K562 (cell line): ENCODE measurements at regions of chr3 and their contacts with region 1.

Region 1: GRCh38 chr3:41872157-41872556 is 89.7 kb downstream of the ULK4 start:
- DNase-seq: no peak
- ATAC-seq: no peak
- H3K4me3 ChIP-seq: no peak overlapping the region
- H3K27ac ChIP-seq: no peak overlapping the region
- H3K4me1 ChIP-seq: no peaks in the 10 kb centered on the region
- H3K27me3 ChIP-seq: peaks cover 2 to 7% of the 10 kb centered on the region in 2 experiments; a peak in 3 of 5 replicates
- CTCF ChIP-seq: no peak
- EP300 ChIP-seq: no peak
- POLR2A ChIP-seq: no peak
- RAD21 ChIP-seq: no peak

Region 2: GRCh38 chr3:40719660-40720287 is 1152.4 kb before region 1 on chr3:
- CTCF ChIA-PET with region 1: no interaction called
- POLR2A ChIA-PET with region 1: no interaction called
- in situ Hi-C with region 1: no loop called
- intact Hi-C with region 1: loop called (anchors 10 kb)
- DNase-seq: peak; percentile 42 to 71 (median 46)
- ATAC-seq: peak; percentile 69
- H3K4me3 ChIP-seq: no peak overlapping the region
- H3K27ac ChIP-seq: no peak overlapping the region
- H3K4me1 ChIP-seq: no peaks in the 10 kb centered on the region
- H3K27me3 ChIP-seq: peaks cover 0 to 6% of the 10 kb centered on the region in 2 experiments; a peak in 1 of 5 replicates
- CTCF ChIP-seq: peak; percentile 23 to 57 (median 51); a peak in 4 of 6 replicates
- EP300 ChIP-seq: no peak
- POLR2A ChIP-seq: no peak
- RAD21 ChIP-seq: peak; percentile 49 to 67; a peak in 3 of 4 replicates

Region 3: DNA sequence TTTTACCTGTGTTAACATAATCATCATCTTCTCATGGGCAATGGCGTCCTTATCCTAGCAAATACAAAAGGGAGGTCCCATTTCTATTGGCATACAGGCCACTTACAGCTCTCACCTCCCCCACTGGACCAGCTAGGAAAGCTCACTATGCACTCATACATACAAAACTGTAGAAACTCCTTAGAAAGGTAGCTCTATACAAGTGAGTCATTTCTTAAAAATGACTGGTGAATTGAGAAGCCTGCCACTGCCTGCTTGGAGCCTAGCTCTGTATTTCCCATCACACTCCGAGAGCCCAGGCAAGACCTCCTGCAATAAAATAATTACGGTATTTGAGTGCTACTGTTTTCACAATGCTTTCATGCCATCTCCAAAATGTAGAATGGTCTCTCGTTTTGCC is 232.1 kb before region 1 on chr3:
- CTCF ChIA-PET with region 1: no interaction called
- POLR2A ChIA-PET with region 1: no interaction called
- in situ Hi-C with region 1: no loop called
- intact Hi-C with region 1: no loop called
- DNase-seq: no peak
- ATAC-seq: no peak
- H3K4me3 ChIP-seq: no peak overlapping the region
- H3K27ac ChIP-seq: no peak overlapping the region
- H3K4me1 ChIP-seq: no peaks in the 10 kb centered on the region
- H3K27me3 ChIP-seq: no peaks in the 10 kb centered on the region
- CTCF ChIP-seq: no peak
- EP300 ChIP-seq: no peak
- POLR2A ChIP-seq: no peak
- RAD21 ChIP-seq: no peak

Region 4: GRCh38 chr3:41907330-41908073 is 35.3 kb after region 1 on chr3:
- CTCF ChIA-PET with region 1: no interaction called
- POLR2A ChIA-PET with region 1: no interaction called
- in situ Hi-C with region 1: no loop called
- intact Hi-C with region 1: no loop called
- DNase-seq: no peak
- ATAC-seq: no peak
- H3K4me3 ChIP-seq: no peak overlapping the region
- H3K27ac ChIP-seq: no peak overlapping the region
- H3K4me1 ChIP-seq: no peaks in the 10 kb centered on the region
- H3K27me3 ChIP-seq: no peaks in the 10 kb centered on the region
- CTCF ChIP-seq: no peak
- EP300 ChIP-seq: no peak
- POLR2A ChIP-seq: no peak
- RAD21 ChIP-seq: no peak